ENCODE measurements at regions of chr7 and their contacts with region 1.

Region 1: GRCh38 chr7:100132697-100133151 is 6.0 kb downstream of the MBLAC1 start:
- DNase-seq: peak in 1 of 2 experiments; percentile 81
- H3K4me3 ChIP-seq: no peak overlapping the region
- H3K27ac ChIP-seq: no peak overlapping the region
- H3K4me1 ChIP-seq: peaks cover 0 to 8% (median 0%) of the 10 kb centered on the region in 4 experiments; a peak in 2 of 7 replicates
- H3K27me3 ChIP-seq: peaks cover 0 to 11% (median 0%) of the 10 kb centered on the region in 4 experiments; a peak in 2 of 7 replicates
- CTCF ChIP-seq: peak; percentile 92 to 98 (median 97)
- EP300 ChIP-seq: no peak
- POLR2A ChIP-seq: no peak
- RAD21 ChIP-seq: peak; percentile 97 to 98

Region 2: GRCh38 chr7:99897322-99898022 is 235.3 kb before region 1 on chr7:
- CTCF ChIA-PET with region 1: no interaction called
- POLR2A ChIA-PET with region 1: no interaction called
- DNase-seq: no peak
- H3K4me3 ChIP-seq: no peak overlapping the region
- H3K27ac ChIP-seq: no peak overlapping the region
- H3K4me1 ChIP-seq: no peaks in the 10 kb centered on the region
- H3K27me3 ChIP-seq: no peaks in the 10 kb centered on the region
- CTCF ChIP-seq: no peak
- EP300 ChIP-seq: no peak
- POLR2A ChIP-seq: no peak
- RAD21 ChIP-seq: no peak

Region 3: GRCh38 chr7:100119062-100119700 is 13.5 kb before region 1 on chr7 and contains the starts of genes CNPY4 and TAF6:
- CTCF ChIA-PET with region 1: interaction called, 48 read pairs
- POLR2A ChIA-PET with region 1: interaction called, 5 read pairs
- DNase-seq: peak; percentile 89 to 94
- H3K4me3 ChIP-seq: peak within 1 kb of the TSS; percentile 75 to 98 (median 94)
- H3K27ac ChIP-seq: peak within 1 kb of the TSS; percentile 88
- H3K4me1 ChIP-seq: peaks cover 0 to 5% (median 1%) of the 10 kb centered on the region in 4 experiments; a peak in 4 of 7 replicates
- H3K27me3 ChIP-seq: no peaks in the 10 kb centered on the region
- CTCF ChIP-seq: peak in 1 of 3 experiments; percentile 1; a peak in 1 of 4 replicates
- EP300 ChIP-seq: no peak
- POLR2A ChIP-seq: peak; percentile 54 to 66; a peak in 2 of 3 replicates
- RAD21 ChIP-seq: no peak
- total RNA-seq, gene CNPY4: 15.3 and 15.9 TPM in 2 replicates
- total RNA-seq, gene TAF6: 101 and 109 TPM in 2 replicates

Region 4: DNA sequence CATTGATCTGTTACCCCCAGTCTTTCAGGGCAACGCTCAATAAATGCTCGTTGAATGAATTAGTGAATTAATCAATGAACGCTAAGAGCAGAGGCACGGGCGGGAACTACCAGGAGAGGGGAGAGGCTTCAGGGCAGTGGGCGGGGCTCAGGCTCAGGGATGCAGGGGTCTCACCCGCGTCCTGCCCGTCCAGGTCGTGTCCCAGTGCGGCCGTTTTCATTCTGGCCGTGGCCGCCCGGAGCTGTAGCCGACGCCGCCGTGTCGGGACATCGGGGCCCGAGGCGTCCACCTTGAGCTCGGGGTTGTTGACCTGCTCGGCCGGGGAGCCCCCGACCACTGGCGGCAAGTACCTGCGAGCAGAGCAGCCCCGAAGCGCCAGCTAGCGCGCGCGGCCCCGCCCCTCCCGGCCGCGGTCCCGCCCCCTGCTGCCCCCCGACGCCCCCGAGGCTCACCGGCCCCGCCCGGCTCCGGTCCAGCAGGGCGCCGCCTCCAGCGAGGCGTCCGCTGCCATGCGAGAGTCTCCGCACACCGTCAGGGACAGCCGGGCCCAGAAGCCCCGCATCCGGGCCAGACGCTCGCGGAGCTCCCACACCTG is 38.5 kb after region 1 on chr7:
- CTCF ChIA-PET with region 1: interaction called, 94 read pairs
- POLR2A ChIA-PET with region 1: interaction called, 10 read pairs
- DNase-seq: peak in 1 of 2 experiments; percentile 84
- H3K4me3 ChIP-seq: peak overlapping the region; percentile 47 to 67 (median 56)
- H3K27ac ChIP-seq: no peak overlapping the region
- H3K4me1 ChIP-seq: peaks cover 11 to 30% (median 19%) of the 10 kb centered on the region in 4 experiments
- H3K27me3 ChIP-seq: peaks cover 0 to 10% (median 2%) of the 10 kb centered on the region in 4 experiments; a peak in 2 of 7 replicates
- CTCF ChIP-seq: no peak
- EP300 ChIP-seq: no peak
- POLR2A ChIP-seq: 0 out of 3 replicates have a peak, but pooled peaks of 1 of the 2 experiments have one; percentile 38
- RAD21 ChIP-seq: no peak

Region 5: GRCh38 chr7:100200693-100201092 is 68.0 kb after region 1 on chr7:
- CTCF ChIA-PET with region 1: interaction called, 36 read pairs
- POLR2A ChIA-PET with region 1: interaction called, 4 read pairs
- DNase-seq: no peak
- H3K4me3 ChIP-seq: no peak overlapping the region
- H3K27ac ChIP-seq: no peak overlapping the region
- H3K4me1 ChIP-seq: peaks cover 0 to 9% (median 3%) of the 10 kb centered on the region in 4 experiments; a peak in 3 of 7 replicates
- H3K27me3 ChIP-seq: peaks cover 0 to 4% (median 1%) of the 10 kb centered on the region in 4 experiments; a peak in 4 of 7 replicates
- CTCF ChIP-seq: no peak
- EP300 ChIP-seq: no peak
- POLR2A ChIP-seq: no peak
- RAD21 ChIP-seq: no peak

Region 6: DNA sequence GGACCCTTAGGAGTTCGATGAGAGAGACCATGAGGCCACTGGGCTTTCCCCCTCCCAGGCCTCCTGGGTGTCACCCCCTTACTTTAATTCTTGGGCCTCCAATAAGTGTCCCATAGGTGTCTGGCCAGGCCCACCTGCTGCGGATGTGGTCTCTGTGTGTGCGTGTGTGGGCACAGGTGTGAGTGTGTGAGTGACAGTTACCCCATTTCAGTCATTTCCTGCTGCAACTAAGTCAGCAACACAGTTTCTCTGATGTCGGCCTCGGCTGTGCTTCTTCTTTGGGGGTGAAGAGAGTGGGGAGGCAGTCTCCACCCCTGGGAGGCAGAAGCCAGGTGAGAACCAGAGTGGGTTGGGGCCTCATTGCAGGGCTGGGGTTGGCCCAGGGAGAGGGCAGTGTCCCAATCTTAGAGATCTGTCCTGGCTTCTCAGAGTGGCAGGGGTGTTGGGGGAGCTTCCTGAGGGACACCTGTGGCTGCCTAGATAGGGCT is 88.6 kb after region 1 on chr7:
- CTCF ChIA-PET with region 1: interaction called, 104 read pairs
- POLR2A ChIA-PET with region 1: interaction called, 7 read pairs
- DNase-seq: no peak
- H3K4me3 ChIP-seq: no peak overlapping the region
- H3K27ac ChIP-seq: no peak overlapping the region
- H3K4me1 ChIP-seq: no peaks in the 10 kb centered on the region
- H3K27me3 ChIP-seq: no peaks in the 10 kb centered on the region
- CTCF ChIP-seq: no peak
- EP300 ChIP-seq: no peak
- POLR2A ChIP-seq: no peak
- RAD21 ChIP-seq: no peak

Measured in H1 (cell line).